A673 (cell line): ENCODE measurements at regions of chr20 and their contacts with region 1.

Region 1: DNA sequence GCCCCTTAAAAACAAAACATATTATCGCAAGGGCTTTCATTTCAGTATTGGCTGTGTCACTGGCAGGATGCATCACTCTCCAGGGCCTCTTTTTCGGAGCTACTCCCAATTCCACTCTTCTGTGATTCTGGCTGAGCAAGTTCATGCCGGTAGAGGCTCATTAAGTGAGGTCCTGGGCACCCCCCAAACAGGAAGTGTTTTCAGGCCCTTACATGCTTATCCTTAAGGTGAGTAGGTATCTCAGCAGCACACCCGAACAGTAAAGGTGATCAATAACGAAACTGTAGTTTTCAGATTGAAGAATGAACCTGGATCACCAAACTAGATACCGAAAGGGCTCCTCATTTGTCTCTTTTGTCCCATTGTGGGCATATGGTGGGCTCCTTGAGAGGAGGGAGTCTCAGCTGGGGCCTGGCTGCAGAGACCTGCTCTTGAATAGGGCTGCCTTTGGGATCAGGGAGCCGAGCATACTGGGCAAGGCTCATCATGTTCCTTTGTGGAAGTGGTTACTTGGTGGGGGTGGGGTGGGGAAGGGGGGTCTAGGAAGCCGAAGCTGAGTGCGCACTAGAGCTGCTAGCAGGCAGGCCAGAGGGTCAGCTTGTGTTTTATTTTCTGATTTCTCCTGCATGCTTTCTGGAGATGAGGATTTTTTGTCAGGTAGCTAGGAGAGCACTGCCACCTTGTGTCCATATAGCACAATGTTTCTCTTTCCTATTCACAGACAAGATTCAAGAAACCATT is 65.2 kb downstream of the CDS2 start:
- DNase-seq: peak; percentile 78
- H3K4me3 ChIP-seq: no peak overlapping the region
- H3K27ac ChIP-seq: no peak overlapping the region
- H3K4me1 ChIP-seq: no peaks in the 10 kb centered on the region
- H3K27me3 ChIP-seq: no peaks in the 10 kb centered on the region
- CTCF ChIP-seq: peak; percentile 74

Region 2: DNA sequence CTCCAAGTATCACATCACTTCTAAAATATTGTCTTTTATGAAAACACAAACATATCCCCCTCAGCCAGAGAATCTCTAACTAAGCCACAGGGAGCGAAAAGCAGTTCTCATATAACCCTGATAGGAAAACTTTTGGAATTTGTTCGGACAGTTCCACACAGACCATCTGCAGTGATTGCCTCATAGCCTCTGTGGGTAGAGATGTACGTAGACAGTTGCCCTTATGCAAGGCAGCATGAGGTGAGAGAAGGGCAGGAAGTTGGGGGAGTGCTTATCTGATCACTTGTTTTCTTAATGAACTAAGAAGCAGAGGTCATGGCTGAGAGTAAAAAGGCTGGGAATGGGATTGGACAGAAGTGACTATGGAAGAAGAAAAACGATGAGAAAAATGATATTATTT is 230.3 kb before region 1 on chr20:
- CTCF ChIA-PET with region 1: no interaction called
- POLR2A ChIA-PET with region 1: no interaction called
- intact Hi-C with region 1: loop called (anchors 10 kb)
- DNase-seq: no peak
- H3K4me3 ChIP-seq: no peak overlapping the region
- H3K27ac ChIP-seq: no peak overlapping the region
- H3K4me1 ChIP-seq: no peaks in the 10 kb centered on the region
- H3K27me3 ChIP-seq: no peaks in the 10 kb centered on the region
- CTCF ChIP-seq: no peak

Region 3: GRCh38 chr20:5119435-5120188 is 72.4 kb before region 1 on chr20 and contains the start of gene PCNA:
- CTCF ChIA-PET with region 1: interaction called, 3 read pairs
- POLR2A ChIA-PET with region 1: interaction called, 3 read pairs
- intact Hi-C with region 1: loop called (anchors 2 kb)
- DNase-seq: peak; percentile 99
- H3K4me3 ChIP-seq: peak within 1 kb of the TSS; percentile 71
- H3K27ac ChIP-seq: peak within 1 kb of the TSS; percentile 95
- H3K4me1 ChIP-seq: peaks cover 21% of the 10 kb centered on the region
- H3K27me3 ChIP-seq: no peaks in the 10 kb centered on the region
- CTCF ChIP-seq: no peak
- total RNA-seq, gene PCNA: 397 TPM in 2 replicates

Region 4: GRCh38 chr20:5126512-5127203 is 65.3 kb before region 1 on chr20 and contains the start of gene CDS2:
- CTCF ChIA-PET with region 1: interaction called, 65 read pairs
- POLR2A ChIA-PET with region 1: no interaction called
- intact Hi-C with region 1: loop called (anchors 1 kb)
- DNase-seq: peak; percentile 99
- H3K4me3 ChIP-seq: peak within 1 kb of the TSS; percentile 98
- H3K27ac ChIP-seq: peak within 1 kb of the TSS; percentile 95
- H3K4me1 ChIP-seq: peaks cover 24% of the 10 kb centered on the region
- H3K27me3 ChIP-seq: no peaks in the 10 kb centered on the region
- CTCF ChIP-seq: peak; percentile 64
- total RNA-seq, gene CDS2: 67.4 and 68.1 TPM in 2 replicates